AG04449 (cell line): ENCODE measurements at regions of chr12 and their contacts with region 1.

Region 1: GRCh38 chr12:44942714-44943113 is 66.6 kb upstream of the NELL2 start:
- DNase-seq: no peak
- H3K4me3 ChIP-seq: no peak overlapping the region
- CTCF ChIP-seq: no peak

Region 2: DNA sequence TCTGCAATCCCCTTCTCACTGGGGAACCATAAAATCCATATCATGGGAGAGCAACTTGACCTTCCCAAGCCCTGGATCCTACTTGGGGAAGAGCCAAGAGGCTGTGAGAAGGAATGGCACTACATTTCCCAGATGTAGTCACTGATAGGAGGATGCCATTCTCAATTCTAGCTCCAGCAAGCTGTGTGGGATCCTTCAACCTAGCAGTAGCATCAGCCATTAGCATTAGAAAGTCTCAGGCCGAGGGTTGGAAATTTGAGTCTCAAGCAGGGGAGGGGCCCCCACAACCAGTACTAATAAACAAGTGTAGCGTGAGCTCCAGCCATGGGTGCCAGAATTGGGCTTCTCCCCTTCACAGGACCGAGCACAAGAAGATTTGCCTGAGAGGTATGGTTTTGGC is 17.7 kb after region 1 on chr12:
- CTCF ChIA-PET with region 1: interaction called, 14 read pairs
- POLR2A ChIA-PET with region 1: no interaction called
- DNase-seq: no peak
- H3K4me3 ChIP-seq: no peak overlapping the region
- CTCF ChIP-seq: no peak